GM10248 (cell line): ENCODE measurements at regions of chr16 and their contacts with region 1.

Region 1: GRCh38 chr16:3165111-3165822 is 22.7 kb upstream of the OR1F1 start:
- DNase-seq: no peak
- CTCF ChIP-seq: no peak

Region 2: DNA sequence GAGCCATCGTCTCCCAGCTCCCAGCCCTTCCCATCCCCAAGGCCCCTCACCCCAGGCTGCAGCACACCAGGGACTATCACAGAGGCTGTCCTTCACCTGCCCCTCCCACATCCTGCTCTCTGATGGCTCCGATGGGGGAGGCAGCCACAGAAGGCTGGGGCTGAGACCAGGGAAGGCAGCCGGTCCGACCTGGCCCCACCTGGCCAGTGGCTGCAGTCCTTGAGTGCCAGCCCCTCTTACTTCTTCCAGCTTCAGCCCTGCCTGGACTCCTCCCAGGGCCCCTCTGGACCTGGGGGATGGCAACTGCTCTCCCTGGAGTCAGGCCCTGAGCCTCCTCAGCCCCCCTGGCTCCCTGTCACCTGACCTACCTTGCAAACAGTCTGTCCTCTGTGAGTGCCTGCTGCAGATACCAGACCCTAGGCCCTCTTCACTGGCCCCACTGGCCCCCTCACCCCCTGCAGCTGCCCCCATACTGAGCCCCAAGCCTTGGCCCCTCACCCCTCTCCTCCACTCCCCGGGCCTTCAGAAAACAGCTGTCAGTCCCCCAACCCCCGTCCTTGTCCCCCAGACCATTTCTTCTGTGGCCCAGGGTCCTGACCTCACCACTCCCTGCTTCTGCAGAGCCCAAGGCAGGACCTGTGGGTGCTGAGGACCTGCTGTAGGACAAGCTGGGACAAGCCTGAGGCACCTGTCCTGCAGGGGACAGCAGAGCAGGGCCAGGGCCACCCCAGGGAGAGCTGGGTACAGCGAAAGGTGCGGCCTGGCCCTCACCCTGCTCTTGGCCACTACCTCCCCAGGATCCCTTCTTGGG is 425.4 kb before region 1 on chr16:
- CTCF ChIA-PET with region 1: no interaction called
- POLR2A ChIA-PET with region 1: no interaction called
- DNase-seq: no peak
- CTCF ChIP-seq: no peak

Region 3: DNA sequence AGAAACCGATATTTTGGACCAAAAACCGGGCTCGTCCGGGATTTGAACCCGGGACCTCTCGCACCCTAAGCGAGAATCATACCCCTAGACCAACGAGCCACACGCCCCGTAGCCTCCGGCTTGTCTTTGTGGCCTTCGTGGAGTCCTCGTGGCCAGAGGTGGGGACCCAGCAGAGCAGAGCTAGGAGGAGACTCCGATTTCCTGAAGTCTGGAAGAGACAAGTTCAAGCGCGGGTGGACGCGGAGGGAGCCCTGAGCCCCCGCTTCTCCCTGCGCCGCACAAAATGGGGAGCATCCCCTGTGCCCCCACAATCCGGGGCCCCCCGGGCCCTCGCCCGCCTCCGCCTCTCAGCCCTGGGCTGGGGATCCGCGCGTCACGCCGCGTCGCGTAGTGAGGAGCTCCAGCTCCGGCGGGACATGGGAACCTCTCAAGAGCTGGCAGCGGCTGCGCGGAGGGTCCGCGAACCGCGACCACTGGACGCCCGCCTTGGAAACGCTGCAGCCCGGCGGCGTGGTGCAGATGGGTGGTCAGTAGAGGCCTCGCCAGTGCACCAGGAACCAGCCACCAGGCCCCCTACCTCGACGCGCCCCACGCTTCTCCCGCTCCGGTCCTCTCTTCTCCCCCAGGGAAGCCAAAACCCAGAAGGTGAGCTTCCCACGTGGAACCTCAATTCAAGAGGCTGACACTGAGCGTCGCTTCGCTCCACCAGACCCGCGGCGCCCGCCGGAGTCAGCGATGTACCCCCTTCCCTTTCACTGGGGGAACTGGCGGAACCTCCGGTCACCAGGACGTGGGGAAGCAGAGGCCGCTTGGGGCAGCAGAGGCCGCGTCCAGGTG is 17.6 kb after region 1 on chr16:
- CTCF ChIA-PET with region 1: interaction called, 11 read pairs
- POLR2A ChIA-PET with region 1: interaction called, 6 read pairs
- DNase-seq: peak; percentile 40
- CTCF ChIP-seq: peak; percentile 19

Region 4: DNA sequence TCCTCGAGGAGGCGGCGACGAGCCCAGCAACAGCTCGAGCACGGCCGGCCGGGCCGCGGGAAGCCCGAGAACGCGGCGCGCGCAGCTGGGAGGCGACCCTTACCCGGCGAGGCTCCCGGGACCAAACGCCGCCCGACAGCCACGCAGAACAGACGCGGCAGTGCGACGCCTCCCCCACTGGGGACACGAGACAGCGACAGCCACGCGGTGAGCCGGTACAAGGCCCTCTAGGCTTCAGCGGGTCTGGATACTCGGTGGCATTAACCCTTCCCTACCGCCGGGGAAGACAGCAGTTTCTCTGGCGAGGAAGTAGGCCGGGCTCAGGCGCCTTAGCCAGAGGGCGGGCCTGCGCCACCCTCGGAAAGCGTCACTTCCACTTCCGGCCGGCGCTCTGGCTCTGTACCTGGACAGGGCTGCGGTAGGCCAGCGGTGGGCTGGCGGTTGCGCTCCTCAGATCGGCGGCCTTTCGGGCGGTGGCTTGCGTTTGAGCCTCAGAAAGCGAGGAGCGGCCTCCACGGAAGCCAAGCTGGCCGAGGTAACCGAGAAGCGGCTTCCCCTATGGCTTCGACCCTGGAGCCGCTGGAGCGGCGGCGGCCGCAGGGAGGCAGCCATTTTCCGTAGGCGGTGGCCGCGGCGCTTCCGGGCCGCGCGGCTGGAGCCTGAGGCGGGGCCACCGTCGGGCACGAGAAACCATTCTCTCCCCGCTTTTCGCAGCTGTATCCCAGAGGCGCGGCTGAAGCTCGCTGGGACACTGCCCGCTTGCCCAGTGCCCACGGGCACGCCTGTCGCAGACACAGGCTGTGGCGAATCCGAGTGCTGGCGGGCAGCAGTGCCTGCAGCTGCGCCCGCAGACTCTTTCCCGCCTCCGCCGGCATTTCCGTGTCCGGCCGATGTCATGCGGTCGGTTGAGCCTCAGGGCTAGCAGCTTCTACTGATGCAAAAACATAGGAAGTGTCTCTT is 140.1 kb after region 1 on chr16 and contains the starts of genes TIGD7 and ZNF75A:
- CTCF ChIA-PET with region 1: no interaction called
- POLR2A ChIA-PET with region 1: no interaction called
- DNase-seq: peak; percentile 91
- CTCF ChIP-seq: no peak